Left cardiac atrium (tissue), 4 donors: ENCODE measurements at regions of chr19 and their contacts with region 1.

Region 1: GRCh38 chr19:43651758-43652545 is 12.3 kb upstream of the CADM4 start:
- DNase-seq: no peak
- ATAC-seq: peak; percentile 42 to 65

Region 2: DNA sequence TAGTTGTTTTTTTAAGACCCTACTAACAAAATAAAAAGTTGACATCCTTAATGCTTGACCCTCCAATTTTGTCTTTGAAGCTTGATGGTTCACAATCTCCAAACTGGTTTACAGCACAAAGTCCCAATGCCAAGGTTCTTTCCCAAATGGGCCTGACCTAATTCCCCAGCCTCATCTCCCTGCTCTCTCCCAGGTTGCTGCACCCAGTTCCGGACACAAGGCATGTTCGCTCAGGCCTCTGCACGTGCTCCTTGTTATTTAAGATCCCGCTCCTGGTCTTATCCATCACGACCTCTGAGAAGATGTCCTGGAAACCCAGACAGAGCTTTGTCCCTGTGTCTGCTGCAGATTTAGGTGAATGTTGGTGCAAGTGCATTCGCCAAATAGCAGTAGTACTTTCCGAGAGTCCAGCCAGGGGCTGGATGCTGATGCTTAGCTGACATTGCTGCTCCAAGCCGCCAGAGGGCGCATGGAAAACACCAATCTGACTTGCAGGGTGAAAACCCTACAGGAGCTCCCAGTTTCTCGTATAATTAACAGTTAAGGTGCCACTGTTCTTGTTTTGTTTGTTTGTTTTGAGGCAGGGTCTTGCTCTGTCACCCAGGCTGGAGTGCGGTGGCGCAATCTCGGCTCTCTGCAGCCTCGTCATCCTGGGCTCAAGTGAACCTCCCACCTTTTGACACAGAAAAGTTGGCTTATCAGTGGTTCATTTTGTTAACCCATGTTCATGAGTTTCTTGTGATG is 205.0 kb before region 1 on chr19:
- intact Hi-C with region 1: loop called in 1 of 2 experiments (anchors 10 kb)
- DNase-seq: peak; percentile 79
- ATAC-seq: peak; percentile 86 to 91

Region 3: DNA sequence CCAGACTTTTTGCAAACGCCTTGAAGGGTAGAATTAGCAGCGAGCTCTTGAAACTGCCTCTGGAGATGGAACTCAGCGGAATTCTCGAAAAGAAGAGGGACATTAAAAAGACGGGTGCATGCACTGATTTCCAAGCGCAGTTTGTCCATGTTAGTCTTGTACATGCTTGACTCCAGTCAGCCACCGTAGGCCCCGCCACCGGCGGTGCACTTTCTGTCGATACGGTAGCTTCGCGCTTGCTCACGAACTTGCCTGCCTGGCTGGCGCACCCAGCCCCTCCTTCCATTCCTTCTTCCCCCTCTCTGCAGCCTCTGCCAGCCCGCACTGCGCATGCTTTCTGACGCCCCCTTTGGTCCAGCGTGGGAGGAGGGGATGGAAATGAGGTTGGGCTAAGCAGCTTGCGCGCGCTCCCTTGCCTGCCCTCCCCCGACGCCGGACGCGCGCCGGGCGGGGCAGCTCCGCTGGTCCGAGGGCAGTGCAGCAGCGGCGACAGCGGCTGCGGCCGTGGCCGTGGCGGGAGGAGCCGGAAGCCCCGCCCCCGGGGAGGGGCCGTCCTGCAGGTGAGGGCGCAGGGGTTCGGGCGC is 118.9 kb before region 1 on chr19 and contains the start of gene ZNF575:
- intact Hi-C with region 1: loop called in 1 of 2 experiments (anchors 5 kb)
- DNase-seq: peak; percentile 89
- ATAC-seq: peak; percentile 82 to 83
- total RNA-seq, gene ZNF575: 1.1 to 1.6 TPM

Region 4: GRCh38 chr19:43555185-43555770 is 96.7 kb before region 1 on chr19:
- intact Hi-C with region 1: loop called in 1 of 2 experiments (anchors 10 kb)
- DNase-seq: peak; percentile 53
- ATAC-seq: peak in 1 of 2 donors; percentile 63

Region 5: DNA sequence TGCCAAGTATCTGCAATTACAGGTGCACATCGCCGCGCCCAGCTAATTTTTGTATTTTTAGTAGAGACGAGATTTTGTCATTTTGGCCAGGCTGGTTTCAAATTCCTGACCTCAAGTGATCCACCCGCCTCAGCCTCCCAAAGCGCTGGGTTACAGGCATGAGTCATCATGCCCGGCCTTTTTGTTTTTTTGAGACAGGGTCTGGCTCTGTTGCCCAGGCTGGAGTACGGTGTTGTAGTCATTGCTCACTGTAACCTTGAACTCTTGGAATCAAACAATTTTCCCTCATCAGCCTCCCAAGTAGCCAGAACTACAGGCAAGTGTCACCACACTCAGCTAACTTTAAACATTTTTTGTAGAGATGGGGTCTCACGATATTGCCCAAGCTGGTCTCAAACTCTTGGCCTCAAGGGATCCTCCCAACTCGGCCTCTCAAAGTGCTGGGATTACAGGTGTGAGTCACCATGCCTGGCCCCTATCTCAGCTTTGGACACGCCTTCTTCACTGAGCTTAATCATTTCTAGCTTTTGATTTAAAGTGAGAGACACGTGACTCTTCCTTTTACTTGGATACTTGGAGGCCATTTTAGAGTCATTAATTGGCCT is 59.9 kb after region 1 on chr19:
- intact Hi-C with region 1: no loop called
- DNase-seq: no peak
- ATAC-seq: no peak

Region 6: DNA sequence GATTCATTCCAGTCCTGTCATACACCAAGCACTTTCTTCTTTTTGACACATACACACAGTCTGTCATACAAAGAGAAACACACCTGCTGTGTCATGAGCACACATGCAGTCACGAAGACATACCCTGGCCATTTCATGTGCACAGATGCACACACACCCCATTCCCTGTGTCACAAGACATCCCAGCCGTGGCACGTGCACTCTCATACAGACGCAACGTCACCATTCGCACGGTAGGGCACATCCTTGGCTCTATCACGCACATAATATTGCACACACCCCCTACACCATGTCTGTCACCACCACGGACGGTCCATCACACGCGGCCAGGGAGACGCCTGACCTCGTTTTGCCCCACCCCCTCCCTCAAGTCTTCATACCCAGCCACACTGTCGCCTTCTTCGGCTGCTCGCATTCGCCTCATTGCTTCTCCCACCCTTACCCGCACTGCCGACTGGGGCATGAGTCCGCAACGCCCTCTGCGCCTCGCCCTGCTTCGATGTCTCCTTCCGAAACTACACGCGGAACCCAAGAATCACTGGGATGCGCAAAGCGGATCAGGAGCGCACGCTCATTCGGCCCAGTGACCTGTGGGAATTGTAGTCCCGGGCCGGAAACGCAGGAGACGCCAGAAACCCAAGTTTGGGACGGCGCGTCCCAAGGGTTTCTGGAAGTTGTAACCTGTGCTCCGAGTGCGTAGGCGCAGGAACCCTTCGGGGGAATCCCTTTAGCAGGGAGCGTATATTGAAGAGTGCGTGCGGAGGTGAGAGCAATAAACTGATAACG is 168.3 kb after region 1 on chr19:
- intact Hi-C with region 1: no loop called
- DNase-seq: peak; percentile 69
- ATAC-seq: peak in 1 of 2 donors; percentile 88

Region 7: DNA sequence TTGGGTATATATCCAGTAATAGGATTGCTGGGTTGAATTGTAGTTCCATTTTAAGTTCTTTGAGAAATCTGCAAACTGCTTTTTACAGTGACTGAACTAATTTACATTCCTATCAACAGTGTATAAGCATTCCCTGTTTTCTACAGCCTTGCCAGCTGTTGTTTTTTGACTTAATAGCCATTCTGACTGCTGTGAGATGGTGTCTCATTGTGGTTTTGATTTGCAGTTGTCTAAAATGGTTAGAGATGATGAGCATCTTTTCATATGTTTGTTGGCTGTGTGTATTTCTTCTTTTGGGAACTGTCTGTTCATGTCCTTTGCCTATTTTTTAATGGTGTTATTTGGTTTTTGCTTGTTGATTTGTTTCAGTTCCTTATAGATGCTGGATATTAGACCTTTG is 369.3 kb after region 1 on chr19:
- intact Hi-C with region 1: no loop called
- DNase-seq: no peak
- ATAC-seq: no peak